CD14-positive monocyte (primary cell): ENCODE measurements at regions of chr1 and their contacts with region 1.

Region 1: DNA sequence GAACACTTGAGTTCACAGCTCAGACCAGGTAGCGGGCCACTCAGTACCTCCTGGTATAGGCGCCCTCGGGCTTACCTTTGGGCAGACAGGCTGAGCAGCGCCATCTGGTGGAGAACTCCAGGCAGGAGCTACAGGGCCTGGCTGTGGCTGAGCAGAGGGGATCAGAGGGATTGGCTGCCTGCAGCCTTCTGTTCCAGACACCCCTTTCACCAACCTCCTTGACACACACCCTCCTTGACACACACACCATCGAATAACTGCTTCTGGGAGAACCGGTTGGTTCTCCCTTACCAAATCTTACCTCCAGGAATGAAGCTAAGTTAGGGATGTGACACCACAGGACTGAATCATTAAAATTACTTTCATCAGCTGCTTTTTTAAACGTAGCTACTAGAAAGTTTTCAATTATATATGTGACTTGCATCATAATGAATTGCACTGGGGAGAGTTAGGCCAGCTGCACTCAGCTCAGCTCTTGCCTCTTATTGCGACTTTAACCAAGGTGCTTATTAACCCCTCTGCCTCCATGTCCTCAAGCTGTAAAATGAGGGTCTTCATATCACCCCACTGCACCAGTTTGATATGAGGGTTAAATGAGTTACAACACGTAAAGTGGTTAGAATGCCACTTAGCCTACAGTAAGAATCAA is 6.6 kb downstream of the LIN28A start:
- DNase-seq: peak; percentile 56 to 71 (median 68)
- H3K4me3 ChIP-seq: no peak overlapping the region
- H3K4me3 Mint-ChIP-seq: no peak overlapping the region
- H3K27ac ChIP-seq: no peak overlapping the region
- H3K27ac Mint-ChIP-seq: no peak overlapping the region
- H3K4me1 ChIP-seq: no peaks in the 10 kb centered on the region
- H3K4me1 Mint-ChIP-seq: no peaks in the 10 kb centered on the region
- H3K27me3 ChIP-seq: peaks cover 33 to 39% of the 10 kb centered on the region in 2 donors
- H3K27me3 Mint-ChIP-seq: peaks cover 37 to 58% (median 47%) of the 10 kb centered on the region in 3 donors
- CTCF ChIP-seq: peak; percentile 95

Region 2: DNA sequence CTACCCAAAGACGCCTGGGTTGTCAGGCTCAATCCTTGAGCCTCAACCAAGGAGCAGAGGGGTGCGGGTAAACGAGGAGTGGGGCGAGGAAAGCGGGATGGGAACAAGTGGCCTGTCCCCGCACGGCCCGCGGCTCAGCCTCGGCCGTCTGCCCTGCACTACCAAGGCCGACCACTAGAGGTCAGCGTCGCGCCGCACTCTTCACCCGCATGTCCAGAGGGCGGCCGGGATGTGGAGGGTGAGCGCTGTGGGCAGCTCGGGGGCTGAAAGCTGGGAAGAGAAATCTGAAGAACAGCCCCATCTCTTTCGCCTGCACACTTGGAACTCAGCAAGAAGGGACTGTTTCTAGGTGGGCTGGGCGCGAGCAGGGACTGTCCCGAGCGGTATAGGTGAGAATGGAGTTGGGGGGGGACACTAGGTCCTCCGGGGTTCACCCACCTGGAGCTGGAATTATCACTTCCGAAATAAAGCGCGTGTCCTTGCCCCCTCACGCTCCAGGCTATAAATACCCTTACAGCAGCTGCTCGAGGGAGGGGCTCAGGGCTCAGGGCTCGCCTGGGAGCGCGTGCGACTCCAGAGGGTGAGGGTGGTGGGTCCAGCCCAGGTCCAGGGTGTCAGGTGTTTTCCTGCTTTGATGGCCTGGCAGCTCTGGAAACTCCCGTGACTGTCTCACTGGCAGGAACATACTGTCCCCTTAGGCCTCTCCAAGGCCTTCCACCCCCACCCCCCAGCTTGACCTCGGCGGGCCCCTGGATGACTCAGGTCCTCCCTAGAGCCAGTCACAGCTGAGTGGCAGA is 381.1 kb before region 1 on chr1:
- intact Hi-C with region 1: loop called in 1 of 2 experiments (anchors 5 kb)
- DNase-seq: peak; percentile 66 to 75 (median 69)
- H3K4me3 ChIP-seq: peak overlapping the region; percentile 57 to 83 (median 80)
- H3K4me3 Mint-ChIP-seq: peak overlapping the region; percentile 95 to 96
- H3K27ac ChIP-seq: peak overlapping the region in 1 of 2 donors; percentile 36
- H3K27ac Mint-ChIP-seq: peak overlapping the region in 5 of 7 donors; percentile 54 to 91 (median 88)
- H3K4me1 ChIP-seq: peaks cover 11 to 21% of the 10 kb centered on the region in 2 donors
- H3K4me1 Mint-ChIP-seq: peaks cover 15% of the 10 kb centered on the region
- H3K27me3 ChIP-seq: peaks cover 0 to 24% of the 10 kb centered on the region in 2 donors
- H3K27me3 Mint-ChIP-seq: peaks cover 25 to 33% (median 26%) of the 10 kb centered on the region in 3 donors
- CTCF ChIP-seq: peak; percentile 98